ENCODE measurements at regions of chr19 and their contacts with region 1.

Region 1: GRCh38 chr19:8423817-8424223 is 10.7 kb downstream of the MARCHF2 start:
- DNase-seq: peak; percentile 95
- ATAC-seq: peak; percentile 98 to 99

Region 2: GRCh38 chr19:8459520-8460259 is 35.9 kb after region 1 on chr19:
- intact Hi-C with region 1: loop called in 1 of 2 experiments (anchors 5 kb)
- DNase-seq: no peak
- ATAC-seq: peak; percentile 62 to 78

Measured in left cardiac atrium (tissue), 4 donors.